ENCODE measurements at regions of chr1 and their contacts with region 1.

Region 1: DNA sequence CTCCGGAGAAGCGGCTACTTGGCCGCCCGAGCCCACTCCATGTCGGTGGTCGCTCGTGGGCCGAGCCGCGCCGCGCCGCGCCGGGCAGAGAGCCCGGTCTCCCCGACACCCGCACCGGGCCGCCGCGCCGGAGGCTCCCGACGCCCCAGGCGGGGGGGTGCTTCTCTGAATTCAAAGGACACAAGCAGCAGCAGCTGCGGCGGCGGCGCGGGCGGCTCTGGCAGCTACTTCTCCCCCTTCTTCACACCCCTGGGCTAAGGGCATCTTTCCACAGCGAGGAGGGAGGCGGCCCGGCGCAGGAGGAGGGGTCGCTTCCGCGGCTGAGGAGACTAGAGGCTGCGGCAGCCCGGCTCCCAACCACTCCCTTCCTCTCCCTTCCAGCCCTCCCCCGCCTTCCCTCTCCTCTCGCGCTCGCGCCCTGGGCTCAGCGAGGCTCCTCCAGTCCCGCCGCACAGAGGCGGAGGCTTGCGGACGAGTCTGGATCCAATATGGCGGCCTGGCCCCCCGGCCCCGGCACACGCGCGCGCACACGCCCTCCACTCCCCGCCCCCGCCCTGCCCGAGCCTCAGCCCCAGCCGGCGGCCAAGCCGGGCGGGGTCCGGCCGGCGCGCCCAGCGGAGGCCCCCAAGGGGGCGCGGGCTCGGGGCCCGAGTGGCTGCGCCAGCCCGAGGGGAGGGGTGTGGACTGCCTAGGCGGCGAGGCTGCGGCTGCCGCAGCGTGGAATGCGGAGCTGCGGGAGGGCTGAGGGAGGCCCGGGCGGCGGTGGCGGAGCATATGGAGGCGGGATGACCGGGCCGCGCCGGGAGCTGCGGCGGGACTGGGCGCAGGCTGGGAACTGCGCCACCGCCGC is at the start of gene CDC42BPA:
- DNase-seq: peak; percentile 91
- total RNA-seq, gene CDC42BPA: 33.5 TPM

Region 2: DNA sequence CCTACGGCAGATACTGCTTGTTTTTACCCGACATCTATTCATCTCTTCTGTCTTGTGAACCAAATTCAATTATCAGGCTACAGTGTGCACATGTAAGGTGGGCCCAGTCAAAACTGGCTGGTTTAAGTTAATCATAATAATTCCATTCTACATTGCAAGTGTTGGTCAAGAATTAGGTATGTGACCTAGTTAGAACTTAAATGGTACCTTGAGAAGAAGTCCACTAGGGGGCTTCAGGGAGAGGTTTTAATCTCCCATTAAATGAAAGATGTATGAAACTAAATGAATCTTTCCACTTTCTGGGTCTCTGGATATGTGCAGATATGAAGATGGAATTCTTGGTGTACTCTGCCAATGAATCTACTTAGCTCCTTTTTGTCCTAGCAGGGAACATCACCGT is 187.0 kb before region 1 on chr1:
- intact Hi-C with region 1: loop called (anchors 10 kb)
- DNase-seq: no peak

Region 3: DNA sequence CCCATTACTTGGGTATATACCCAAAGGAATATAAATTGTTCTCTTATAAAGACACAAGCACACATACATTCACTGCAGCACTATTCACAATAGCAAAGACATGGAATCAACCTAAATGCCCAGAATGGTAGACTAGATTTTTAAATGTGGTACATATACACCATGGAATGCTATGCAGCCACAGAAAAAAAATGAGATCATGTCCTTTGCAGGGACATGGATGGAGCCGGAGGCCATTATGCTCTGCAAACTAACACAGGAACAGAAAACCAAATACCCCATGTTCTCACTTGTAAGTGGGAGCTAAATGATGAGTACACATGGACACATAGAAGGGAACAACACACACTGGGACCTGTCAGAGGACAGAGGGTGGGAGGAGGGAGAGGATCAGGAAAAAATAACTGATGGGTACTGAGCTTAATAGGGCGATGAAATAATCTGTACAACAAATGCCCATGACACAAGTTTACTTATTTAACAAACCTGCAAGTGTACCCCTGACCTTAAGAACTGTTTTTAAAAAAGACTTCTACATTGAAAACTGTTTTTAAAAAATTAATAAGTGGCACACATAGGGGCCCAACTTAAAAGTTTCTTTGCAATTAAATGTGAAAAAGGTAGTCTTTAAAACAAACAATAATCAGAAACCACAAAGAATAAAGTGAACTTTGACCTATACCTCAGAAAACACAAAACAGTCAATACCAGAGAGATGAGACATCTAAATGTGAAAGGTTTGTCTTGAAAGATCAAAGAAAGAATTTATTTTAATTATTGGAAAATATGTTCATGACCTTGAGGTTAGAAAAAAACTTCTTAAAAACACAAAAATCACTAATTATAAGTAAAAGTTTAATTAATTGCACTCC is 75.2 kb before region 1 on chr1:
- intact Hi-C with region 1: loop called (anchors 5 kb)
- DNase-seq: no peak

Region 4: GRCh38 chr1:227357171-227357880 is 39.1 kb after region 1 on chr1:
- intact Hi-C with region 1: loop called (anchors 1 kb)
- DNase-seq: peak; percentile 86

Region 5: DNA sequence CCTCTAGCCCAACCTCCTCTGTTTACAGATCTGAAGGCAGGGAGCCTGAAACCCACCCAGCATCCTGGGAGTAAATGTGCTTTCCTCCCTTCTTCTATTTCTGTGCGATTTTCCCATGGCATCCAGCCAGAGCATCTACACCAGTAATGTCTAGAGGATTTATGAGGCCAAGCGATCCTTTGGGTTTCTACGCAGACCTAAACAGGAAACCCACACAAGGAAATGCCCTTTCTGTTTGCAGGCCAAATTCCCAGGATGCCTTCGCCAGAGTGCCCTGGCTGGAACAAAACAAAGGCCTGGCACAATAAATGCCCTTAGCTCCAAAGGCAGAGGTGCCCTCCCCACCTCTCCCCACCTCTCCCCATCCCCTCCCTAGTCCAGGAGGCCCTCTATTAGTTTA is 110.6 kb after region 1 on chr1:
- intact Hi-C with region 1: loop called (anchors 2 kb)
- DNase-seq: no peak